GM10248 (cell line): ENCODE measurements at regions of chr12 and their contacts with region 1.

Region 1: DNA sequence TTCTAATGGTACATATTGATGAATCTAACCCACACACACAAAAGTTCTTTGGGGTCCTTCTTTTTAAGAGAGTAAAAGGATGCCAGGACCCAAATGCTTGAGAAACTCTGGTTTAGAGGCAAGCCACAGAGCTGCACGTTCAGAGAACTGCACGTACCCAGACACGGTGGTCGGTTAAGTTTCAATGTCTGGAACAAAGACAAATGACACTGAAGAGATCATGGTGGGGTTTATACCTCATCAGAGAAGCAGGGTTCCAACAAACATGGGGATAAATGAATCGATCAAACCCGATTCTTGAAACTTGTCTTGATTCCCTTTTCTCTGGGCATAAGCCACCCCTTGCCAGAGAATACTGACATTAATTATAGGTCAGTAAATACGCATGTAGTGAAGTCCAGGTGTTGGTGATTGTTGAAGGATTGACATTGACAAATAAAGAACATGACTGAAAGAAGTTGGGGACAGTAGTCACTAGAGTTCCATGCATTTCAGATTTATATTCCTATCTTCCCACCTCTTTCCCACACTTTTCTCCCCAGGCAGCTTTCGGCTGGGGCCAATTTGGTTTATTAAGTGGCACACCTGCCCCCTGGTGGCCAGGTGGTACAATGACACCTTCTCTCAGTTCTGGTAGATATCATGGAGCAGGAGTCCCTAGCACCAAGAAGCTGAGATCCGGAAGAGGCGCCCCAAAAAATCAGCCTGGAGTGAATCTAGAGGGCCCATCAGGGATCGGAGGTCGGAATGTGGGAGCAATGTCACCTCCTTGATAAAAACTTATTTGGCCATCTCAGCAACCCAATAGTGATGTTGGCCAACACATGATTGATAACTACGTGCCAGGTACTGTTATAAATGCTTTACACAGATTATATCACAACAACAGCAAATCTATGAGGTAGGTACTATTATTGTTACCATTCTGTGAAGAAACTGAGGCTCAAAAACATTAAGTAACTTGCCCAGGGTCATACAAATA is 17.8 kb upstream of the HDAC7 start:
- DNase-seq: peak; percentile 69
- CTCF ChIP-seq: peak; percentile 90

Region 2: DNA sequence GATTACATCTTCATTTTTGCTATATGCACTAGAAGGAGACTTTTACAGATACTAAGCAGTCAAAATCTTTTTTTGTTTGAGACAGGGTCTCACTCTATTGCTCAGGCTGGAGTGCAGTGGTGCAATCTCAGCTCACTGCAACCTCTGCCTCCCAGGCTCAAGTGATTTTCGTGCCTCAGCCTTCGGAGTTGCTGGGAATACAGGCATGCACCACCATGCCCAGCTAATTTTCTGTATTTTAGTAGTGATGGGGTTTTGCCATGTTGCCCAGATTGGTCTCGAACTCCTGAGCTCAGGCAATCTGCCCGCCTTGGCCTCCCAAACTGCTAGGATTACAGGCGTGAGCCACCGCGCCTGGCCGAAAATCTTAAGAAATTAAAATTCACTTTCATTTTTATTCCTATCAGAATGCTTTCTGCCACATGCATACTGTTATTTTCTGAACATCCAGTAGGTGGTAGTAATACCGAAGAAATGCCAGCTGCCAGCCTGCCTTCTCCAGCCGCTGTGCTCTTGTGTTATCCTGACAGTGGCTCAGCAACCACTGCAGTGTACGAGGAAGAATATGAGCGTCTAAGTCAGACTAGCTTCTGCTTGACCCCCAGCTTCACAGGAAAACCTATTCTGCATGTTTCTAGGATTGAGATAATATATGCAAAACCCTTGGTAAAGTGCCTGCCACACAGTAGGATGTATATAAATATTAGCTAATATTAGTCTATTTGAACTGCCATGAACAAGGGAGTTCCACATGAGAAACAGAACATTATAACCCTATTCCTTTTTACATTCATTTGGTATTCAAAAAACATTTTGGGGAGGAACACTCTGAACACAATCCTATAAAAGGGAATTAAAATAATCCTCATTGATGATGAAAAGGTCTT is 185.9 kb before region 1 on chr12:
- CTCF ChIA-PET with region 1: interaction called, 13 read pairs
- POLR2A ChIA-PET with region 1: no interaction called
- DNase-seq: peak; percentile 34
- CTCF ChIP-seq: peak; percentile 56

Region 3: GRCh38 chr12:47742253-47742825 is 95.1 kb before region 1 on chr12:
- CTCF ChIA-PET with region 1: interaction called, 230 read pairs
- POLR2A ChIA-PET with region 1: no interaction called
- DNase-seq: peak; percentile 64
- CTCF ChIP-seq: peak; percentile 92

Region 4: GRCh38 chr12:47773062-47773857 is 64.2 kb before region 1 on chr12 and contains the start of gene SLC48A1:
- CTCF ChIA-PET with region 1: interaction called, 76 read pairs
- POLR2A ChIA-PET with region 1: no interaction called
- DNase-seq: peak; percentile 91
- CTCF ChIP-seq: peak; percentile 41

Region 5: DNA sequence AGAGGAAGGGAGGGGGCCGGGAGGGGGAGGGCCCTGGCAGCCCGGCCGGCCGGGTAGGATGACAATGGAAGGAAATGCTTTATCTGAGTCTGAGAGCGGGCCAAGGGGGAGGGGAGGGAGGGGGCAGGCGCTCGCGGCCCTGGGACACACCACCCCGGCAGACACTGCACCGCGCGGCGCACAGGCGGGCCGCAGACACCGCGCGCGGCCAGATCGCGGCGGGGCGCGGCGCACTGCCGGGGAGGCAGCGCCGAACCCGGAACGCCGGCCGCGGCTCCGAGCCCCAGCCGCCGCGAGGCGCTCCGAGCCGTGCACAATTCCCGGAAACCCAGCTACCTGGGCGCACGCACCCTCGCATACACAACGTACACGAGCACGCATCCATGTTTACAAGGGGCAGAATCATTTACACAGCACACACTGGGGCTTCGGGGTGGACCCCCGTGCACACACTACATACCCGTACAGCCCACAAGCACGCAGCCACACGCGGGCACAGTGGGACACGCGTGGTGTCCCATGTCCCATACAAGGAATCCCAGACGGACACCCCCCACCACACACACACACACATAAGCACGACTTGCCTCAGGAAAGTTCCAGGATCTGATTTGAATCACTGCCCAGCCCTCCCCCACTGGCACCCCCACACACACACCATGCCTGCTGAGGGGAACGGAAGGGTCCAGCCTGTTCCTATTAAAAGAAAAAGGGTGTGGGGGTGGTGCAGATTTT is 17.4 kb before region 1 on chr12 and contains the start of gene HDAC7:
- CTCF ChIA-PET with region 1: interaction called, 685 read pairs
- POLR2A ChIA-PET with region 1: interaction called, 8 read pairs
- DNase-seq: peak; percentile 80
- CTCF ChIP-seq: no peak

Region 6: GRCh38 chr12:47882781-47883546 is 45.5 kb after region 1 on chr12:
- CTCF ChIA-PET with region 1: interaction called, 39 read pairs
- POLR2A ChIA-PET with region 1: no interaction called
- DNase-seq: peak; percentile 75
- CTCF ChIP-seq: no peak

Region 7: GRCh38 chr12:47949441-47950308 is 112.2 kb after region 1 on chr12:
- CTCF ChIA-PET with region 1: interaction called, 11 read pairs
- POLR2A ChIA-PET with region 1: no interaction called
- DNase-seq: peak; percentile 81
- CTCF ChIP-seq: peak; percentile 86